Activated B cell treated with CpG ODN at 0.5 μM for 24 hours (primary cell): ENCODE measurements at regions of chr15 and their contacts with region 1.

Region 1: GRCh38 chr15:83108266-83109226 is 1.1 kb downstream of the TM6SF1 start:
- DNase-seq: peak; percentile 26
- ATAC-seq: peak; percentile 85
- H3K4me3 Mint-ChIP-seq: peak overlapping the region; percentile 87
- H3K27ac Mint-ChIP-seq: peak overlapping the region; percentile 65
- H3K4me1 Mint-ChIP-seq: peaks cover 20% of the 10 kb centered on the region
- H3K27me3 Mint-ChIP-seq: peaks cover 21% of the 10 kb centered on the region
- CTCF ChIP-seq: no peak

Region 2: GRCh38 chr15:82566690-82567089 is 541.9 kb before region 1 on chr15:
- CTCF ChIA-PET with region 1: no interaction called
- POLR2A ChIA-PET with region 1: no interaction called
- intact Hi-C with region 1: no loop called
- DNase-seq: no peak
- ATAC-seq: no peak
- H3K4me3 Mint-ChIP-seq: no peak overlapping the region
- H3K27ac Mint-ChIP-seq: no peak overlapping the region
- H3K4me1 Mint-ChIP-seq: no peaks in the 10 kb centered on the region
- H3K27me3 Mint-ChIP-seq: peaks cover 12% of the 10 kb centered on the region
- CTCF ChIP-seq: no peak

Region 3: GRCh38 chr15:83066734-83067637 is 41.6 kb before region 1 on chr15 and contains the start of gene BTBD1:
- CTCF ChIA-PET with region 1: no interaction called
- POLR2A ChIA-PET with region 1: interaction called, 22 read pairs
- intact Hi-C with region 1: loop called (anchors 5 kb)
- DNase-seq: peak; percentile 86
- ATAC-seq: peak; percentile 92
- H3K4me3 Mint-ChIP-seq: peak within 1 kb of the TSS; percentile 87
- H3K27ac Mint-ChIP-seq: peak within 1 kb of the TSS; percentile 73
- H3K4me1 Mint-ChIP-seq: peaks cover 9% of the 10 kb centered on the region
- H3K27me3 Mint-ChIP-seq: no peaks in the 10 kb centered on the region
- CTCF ChIP-seq: no peak
- total RNA-seq, gene BTBD1: 47.9 and 54.2 TPM in 2 replicates

Region 4: GRCh38 chr15:83092309-83092976 is 16.1 kb before region 1 on chr15:
- CTCF ChIA-PET with region 1: interaction called, 3 read pairs
- POLR2A ChIA-PET with region 1: no interaction called
- intact Hi-C with region 1: loop called (anchors 2 kb)
- DNase-seq: no peak
- ATAC-seq: peak; percentile 91
- H3K4me3 Mint-ChIP-seq: peak overlapping the region; percentile 50
- H3K27ac Mint-ChIP-seq: peak overlapping the region; percentile 86
- H3K4me1 Mint-ChIP-seq: peaks cover 15% of the 10 kb centered on the region
- H3K27me3 Mint-ChIP-seq: peaks cover 11% of the 10 kb centered on the region
- CTCF ChIP-seq: no peak